ENCODE measurements at regions of chr4 and their contacts with region 1.

Region 1: DNA sequence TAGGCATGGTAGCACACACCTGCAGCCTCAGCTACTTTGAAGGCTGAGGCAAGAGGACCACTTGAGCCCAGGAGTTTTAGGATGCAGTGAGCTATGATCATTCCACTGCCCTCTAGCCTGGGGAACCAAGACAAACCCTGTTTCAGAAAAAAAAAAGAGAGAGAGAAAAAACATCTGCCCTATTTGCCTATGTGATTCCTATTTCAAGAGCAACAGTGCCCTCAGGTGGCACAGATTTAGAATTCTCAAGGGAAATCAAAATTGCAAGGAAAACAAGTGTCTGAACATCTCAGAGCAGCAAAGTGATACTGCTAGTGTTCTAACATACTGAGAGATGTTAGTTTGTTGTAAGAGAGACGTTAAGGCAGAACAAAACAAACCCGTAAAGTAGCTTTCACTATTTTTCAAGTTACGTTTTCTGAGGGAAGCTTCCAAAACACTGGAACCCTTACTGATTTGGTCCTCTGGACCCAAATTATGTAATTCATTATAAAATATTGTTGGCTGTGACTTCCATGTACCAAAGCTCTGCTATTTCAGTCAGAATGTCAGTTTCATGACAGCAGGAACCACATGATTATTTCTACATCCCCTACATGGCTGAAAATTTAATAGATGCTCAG is 7.9 kb downstream of the BDH2 start:
- DNase-seq: peak in 31 of 35 experiments; percentile 2 to 79 (median 32)
- ATAC-seq: peak; percentile 31 to 75 (median 48)
- H3K4me3 ChIP-seq: no peak overlapping the region
- H3K4me3 Mint-ChIP-seq: no peak overlapping the region
- H3K27ac ChIP-seq: no peak overlapping the region
- H3K27ac Mint-ChIP-seq: no peak overlapping the region
- H3K4me1 ChIP-seq: no peaks in the 10 kb centered on the region
- H3K4me1 Mint-ChIP-seq: peaks cover 6 to 19% (median 16%) of the 10 kb centered on the region in 3 donors
- H3K27me3 ChIP-seq: no peaks in the 10 kb centered on the region
- H3K27me3 Mint-ChIP-seq: no peaks in the 10 kb centered on the region

Region 2: DNA sequence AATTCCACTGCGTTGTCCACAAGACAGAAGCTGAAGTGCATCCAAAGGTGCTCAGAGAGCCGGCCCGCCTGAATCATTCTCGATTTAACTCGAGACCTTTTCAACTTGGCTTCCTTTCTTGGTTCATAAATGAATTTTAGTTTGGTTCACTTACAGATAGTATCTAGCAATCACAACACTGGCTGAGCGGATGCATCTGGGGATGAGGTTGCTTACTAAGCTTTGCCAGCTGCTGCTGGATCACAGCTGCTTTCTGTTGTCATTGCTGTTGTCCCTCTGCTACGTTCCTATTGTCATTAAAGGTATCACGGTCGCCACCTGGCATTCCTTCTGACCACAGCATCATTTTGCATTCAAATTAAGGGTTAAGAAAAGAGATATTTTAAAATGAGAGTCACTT is 475.1 kb before region 1 on chr4:
- CTCF ChIA-PET with region 1: no interaction called
- POLR2A ChIA-PET with region 1: interaction called in 1 of 2 experiments, 29 read pairs
- DNase-seq: peak in 1 of 35 experiments; percentile 19
- ATAC-seq: no peak
- H3K4me3 ChIP-seq: no peak overlapping the region
- H3K4me3 Mint-ChIP-seq: peak overlapping the region in 1 of 3 donors; percentile 22
- H3K27ac ChIP-seq: no peak overlapping the region
- H3K27ac Mint-ChIP-seq: peak overlapping the region; percentile 98 to 99
- H3K4me1 ChIP-seq: peaks cover 40 to 48% of the 10 kb centered on the region in 2 experiments
- H3K4me1 Mint-ChIP-seq: peaks cover 75 to 80% (median 77%) of the 10 kb centered on the region in 3 donors
- H3K27me3 ChIP-seq: no peaks in the 10 kb centered on the region
- H3K27me3 Mint-ChIP-seq: no peaks in the 10 kb centered on the region

Region 3: DNA sequence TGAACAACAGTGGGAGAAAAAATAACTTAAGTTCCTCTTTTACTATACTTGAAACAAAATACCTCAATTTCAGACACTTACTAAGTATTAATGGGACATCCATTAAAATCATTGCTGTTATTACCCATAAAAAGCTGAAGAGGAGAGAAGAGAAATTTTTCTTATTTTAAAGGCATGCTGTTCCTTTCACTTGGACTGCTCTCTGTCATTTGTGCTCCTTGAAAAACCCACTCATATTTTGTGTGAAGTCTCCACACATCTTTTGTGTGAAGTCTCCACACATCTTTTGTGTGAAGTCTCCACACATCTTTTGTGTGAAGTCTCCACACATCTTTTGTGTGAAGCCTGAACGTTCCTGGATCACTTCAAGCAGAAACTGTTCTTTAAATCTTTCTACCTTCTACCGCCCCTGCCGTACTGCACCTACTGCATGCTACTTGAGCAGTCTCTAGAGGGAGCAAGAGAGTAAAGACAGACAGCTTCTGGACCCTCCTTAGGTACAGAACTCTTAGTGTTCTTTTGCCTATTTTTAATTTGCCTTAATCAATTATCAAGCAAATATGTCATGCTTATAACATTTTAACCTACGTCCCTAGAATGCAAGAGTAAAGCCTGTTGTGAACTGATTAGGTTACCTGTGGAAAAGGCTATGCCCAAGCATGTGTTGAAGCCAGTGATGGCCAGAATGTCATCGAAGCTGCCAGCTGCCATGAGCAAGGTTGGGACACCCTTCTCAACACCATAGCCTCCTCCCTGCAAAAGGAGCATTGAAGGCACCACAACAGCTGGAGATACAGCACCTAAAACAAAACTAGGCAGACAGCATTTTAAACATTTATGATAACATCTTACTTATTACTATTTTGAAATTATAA is 45.1 kb before region 1 on chr4:
- CTCF ChIA-PET with region 1: interaction called, 14 to 29 read pairs
- POLR2A ChIA-PET with region 1: no interaction called
- DNase-seq: peak in 32 of 35 experiments; percentile 3 to 68 (median 21)
- ATAC-seq: peak; percentile 94 to 99 (median 96)
- H3K4me3 ChIP-seq: no peak overlapping the region
- H3K4me3 Mint-ChIP-seq: no peak overlapping the region
- H3K27ac ChIP-seq: no peak overlapping the region
- H3K27ac Mint-ChIP-seq: peak overlapping the region in 1 of 2 donors; percentile 34
- H3K4me1 ChIP-seq: no peaks in the 10 kb centered on the region
- H3K4me1 Mint-ChIP-seq: peaks cover 0 to 6% (median 2%) of the 10 kb centered on the region in 3 donors
- H3K27me3 ChIP-seq: no peaks in the 10 kb centered on the region
- H3K27me3 Mint-ChIP-seq: no peaks in the 10 kb centered on the region

Region 4: GRCh38 chr4:103075901-103076739 is 15.6 kb before region 1 on chr4:
- CTCF ChIA-PET with region 1: interaction called, 12 to 17 read pairs
- POLR2A ChIA-PET with region 1: interaction called in 1 of 2 experiments, 4 read pairs
- DNase-seq: peak; percentile 48 to 75 (median 65)
- ATAC-seq: peak; percentile 75 to 80 (median 78)
- H3K4me3 ChIP-seq: peak overlapping the region; percentile 77 to 84
- H3K4me3 Mint-ChIP-seq: peak overlapping the region; percentile 85 to 96 (median 88)
- H3K27ac ChIP-seq: peak overlapping the region; percentile 98
- H3K27ac Mint-ChIP-seq: peak overlapping the region; percentile 98 to 99
- H3K4me1 ChIP-seq: peaks cover 9 to 12% of the 10 kb centered on the region in 2 experiments
- H3K4me1 Mint-ChIP-seq: peaks cover 43 to 55% (median 52%) of the 10 kb centered on the region in 3 donors
- H3K27me3 ChIP-seq: no peaks in the 10 kb centered on the region
- H3K27me3 Mint-ChIP-seq: no peaks in the 10 kb centered on the region

Measured in T-cell (primary cell).